CD4-positive, alpha-beta T cell (primary cell): ENCODE measurements at regions of chr17 and their contacts with region 1.

Region 1: GRCh38 chr17:78806451-78806850 is 24.4 kb upstream of the CYTH1 start:
- DNase-seq: peak in 9 of 14 experiments; percentile 27 to 87 (median 66)
- ATAC-seq: peak; percentile 71
- H3K4me3 ChIP-seq: no peak overlapping the region
- H3K4me3 Mint-ChIP-seq: peak overlapping the region; percentile 84
- H3K27ac ChIP-seq: peak overlapping the region in 1 of 2 donors; percentile 64
- H3K27ac Mint-ChIP-seq: peak overlapping the region; percentile 95
- H3K4me1 ChIP-seq: peaks cover 52% of the 10 kb centered on the region
- H3K4me1 Mint-ChIP-seq: peaks cover 63% of the 10 kb centered on the region
- H3K27me3 ChIP-seq: no peaks in the 10 kb centered on the region
- H3K27me3 Mint-ChIP-seq: no peaks in the 10 kb centered on the region
- CTCF ChIP-seq: peak; percentile 47

Region 2: DNA sequence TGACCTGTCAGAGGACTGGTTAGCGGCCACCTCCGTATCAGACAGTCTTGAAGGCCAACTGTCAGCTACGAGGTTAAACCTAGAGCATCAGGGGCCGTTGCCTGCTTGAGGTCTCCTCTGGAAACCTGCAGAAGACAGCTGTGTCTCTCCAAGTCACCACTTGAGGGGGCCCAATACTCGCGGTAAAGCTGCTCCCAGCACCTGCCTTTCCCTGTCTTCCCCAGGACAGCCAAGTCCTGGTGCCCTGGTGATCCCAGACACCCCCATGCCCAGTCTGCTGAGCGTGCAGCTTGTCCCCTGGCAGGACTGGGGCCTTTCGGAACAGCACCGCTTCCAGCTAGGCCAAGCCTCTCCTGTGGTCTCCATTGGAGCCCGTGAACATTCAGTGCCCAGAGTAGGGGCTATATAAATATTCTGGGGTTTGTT is 309.3 kb before region 1 on chr17:
- CTCF ChIA-PET with region 1: interaction called, 3 read pairs
- POLR2A ChIA-PET with region 1: no interaction called
- intact Hi-C with region 1: loop called in 1 of 2 experiments (anchors 10 kb)
- DNase-seq: peak; percentile 10 to 78 (median 46)
- ATAC-seq: peak; percentile 76
- H3K4me3 ChIP-seq: no peak overlapping the region
- H3K4me3 Mint-ChIP-seq: no peak overlapping the region
- H3K27ac ChIP-seq: no peak overlapping the region
- H3K27ac Mint-ChIP-seq: no peak overlapping the region
- H3K4me1 ChIP-seq: no peaks in the 10 kb centered on the region
- H3K4me1 Mint-ChIP-seq: no peaks in the 10 kb centered on the region
- H3K27me3 ChIP-seq: no peaks in the 10 kb centered on the region
- H3K27me3 Mint-ChIP-seq: no peaks in the 10 kb centered on the region
- CTCF ChIP-seq: peak; percentile 63

Region 3: DNA sequence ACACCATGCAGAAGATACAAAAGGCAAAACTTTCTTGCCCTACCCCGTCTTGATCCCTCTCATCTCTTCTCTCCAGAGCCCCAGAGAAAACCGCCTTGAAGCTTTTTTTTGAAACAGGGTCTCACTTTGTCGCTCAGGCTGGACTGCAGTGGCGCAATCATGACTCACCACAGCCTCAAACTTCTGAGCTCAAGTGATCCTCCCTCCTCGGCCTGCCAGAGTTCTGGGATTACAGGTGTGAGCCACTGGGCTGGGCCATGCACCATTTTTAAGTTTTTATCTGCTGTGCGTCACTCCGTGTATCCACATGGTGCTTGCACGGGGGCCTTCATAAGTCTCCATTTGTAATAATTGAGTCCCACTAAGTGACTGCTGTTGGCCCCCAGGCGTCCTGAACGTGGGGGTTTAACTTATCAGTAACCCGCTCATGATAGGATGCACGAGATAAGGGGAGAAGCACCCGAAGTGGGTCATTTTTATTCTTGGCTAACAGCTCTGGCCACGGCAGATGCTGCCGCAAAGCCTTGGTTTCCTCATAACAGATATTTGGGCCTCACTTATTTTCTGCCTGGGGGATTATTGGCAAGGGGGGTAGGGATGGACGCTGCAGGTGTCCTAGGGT is 237.8 kb before region 1 on chr17:
- CTCF ChIA-PET with region 1: no interaction called
- POLR2A ChIA-PET with region 1: no interaction called
- intact Hi-C with region 1: no loop called
- DNase-seq: peak in 2 of 14 experiments; percentile 40 to 52
- ATAC-seq: no peak
- H3K4me3 ChIP-seq: no peak overlapping the region
- H3K4me3 Mint-ChIP-seq: no peak overlapping the region
- H3K27ac ChIP-seq: no peak overlapping the region
- H3K27ac Mint-ChIP-seq: no peak overlapping the region
- H3K4me1 ChIP-seq: no peaks in the 10 kb centered on the region
- H3K4me1 Mint-ChIP-seq: no peaks in the 10 kb centered on the region
- H3K27me3 ChIP-seq: no peaks in the 10 kb centered on the region
- H3K27me3 Mint-ChIP-seq: no peaks in the 10 kb centered on the region
- CTCF ChIP-seq: no peak

Region 4: DNA sequence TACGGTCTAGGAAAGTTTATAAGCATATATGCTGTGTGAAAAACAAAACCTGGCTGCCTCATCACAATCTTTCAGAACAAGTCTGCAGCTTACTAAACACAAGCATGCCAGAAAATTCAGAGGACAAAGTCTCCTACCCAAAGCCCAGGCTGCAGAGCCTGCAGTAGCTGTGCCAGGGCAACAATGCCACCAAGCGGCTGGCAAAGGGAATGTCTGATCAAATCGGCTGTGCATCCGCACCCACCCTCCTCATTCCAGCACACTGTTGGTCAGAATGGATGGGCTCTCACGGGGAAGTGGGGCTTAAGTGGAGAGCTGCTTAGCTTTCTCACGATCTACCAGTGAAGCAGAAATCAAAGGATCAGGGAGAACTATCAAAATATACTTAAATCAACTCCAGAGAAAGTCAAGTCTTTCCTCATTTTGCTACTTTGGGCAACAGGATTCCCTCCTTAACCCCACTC is 97.9 kb before region 1 on chr17:
- CTCF ChIA-PET with region 1: interaction called, 10 read pairs
- POLR2A ChIA-PET with region 1: interaction called, 3 read pairs
- intact Hi-C with region 1: no loop called
- DNase-seq: peak; percentile 42 to 81 (median 54)
- ATAC-seq: peak; percentile 81
- H3K4me3 ChIP-seq: no peak overlapping the region
- H3K4me3 Mint-ChIP-seq: peak overlapping the region; percentile 79
- H3K27ac ChIP-seq: peak overlapping the region; percentile 11 to 39
- H3K27ac Mint-ChIP-seq: peak overlapping the region; percentile 78
- H3K4me1 ChIP-seq: peaks cover 51% of the 10 kb centered on the region
- H3K4me1 Mint-ChIP-seq: peaks cover 67% of the 10 kb centered on the region
- H3K27me3 ChIP-seq: no peaks in the 10 kb centered on the region
- H3K27me3 Mint-ChIP-seq: no peaks in the 10 kb centered on the region
- CTCF ChIP-seq: peak; percentile 87

Region 5: DNA sequence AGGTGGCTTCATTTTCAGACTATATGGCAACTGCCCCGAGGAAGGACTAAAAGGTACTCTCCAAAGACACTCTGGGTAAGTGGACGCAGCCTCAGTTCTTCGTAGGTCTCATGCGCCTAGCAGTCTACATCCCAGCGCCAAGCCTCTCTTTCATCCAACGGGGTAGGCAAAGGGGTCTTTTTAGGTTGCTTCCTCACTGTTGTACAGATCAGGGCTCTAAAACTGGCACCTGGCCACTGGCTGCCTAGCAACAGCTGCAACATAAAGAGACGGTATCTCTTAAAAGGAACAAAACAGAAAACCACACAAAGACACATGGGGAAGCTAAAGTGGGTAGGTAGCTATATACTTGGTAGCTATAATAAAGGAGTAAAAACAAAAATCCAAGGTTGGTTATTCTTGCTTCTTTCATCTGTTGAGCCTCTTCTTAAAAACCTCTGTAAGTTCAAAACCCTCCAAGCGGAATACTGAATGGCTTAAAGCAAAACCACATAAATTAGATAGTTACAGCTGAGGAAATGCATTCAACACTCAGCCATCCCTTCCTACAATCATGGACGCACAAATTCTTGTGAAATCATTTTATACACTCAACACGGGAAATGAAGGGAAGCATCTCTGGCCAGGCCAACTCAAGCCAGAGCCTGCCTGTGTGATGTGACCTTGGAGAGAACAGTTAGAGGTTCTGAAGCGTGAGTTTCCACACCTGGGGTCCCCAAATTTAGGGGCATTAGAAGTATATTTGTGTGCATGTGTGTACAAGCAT is 47.1 kb before region 1 on chr17:
- CTCF ChIA-PET with region 1: no interaction called
- POLR2A ChIA-PET with region 1: interaction called, 8 read pairs
- intact Hi-C with region 1: loop called in 1 of 2 experiments (anchors 2 kb)
- DNase-seq: peak; percentile 72 to 94 (median 82)
- ATAC-seq: peak; percentile 80
- H3K4me3 ChIP-seq: peak overlapping the region; percentile 32
- H3K4me3 Mint-ChIP-seq: peak overlapping the region; percentile 73
- H3K27ac ChIP-seq: peak overlapping the region; percentile 94 to 95
- H3K27ac Mint-ChIP-seq: peak overlapping the region; percentile 87
- H3K4me1 ChIP-seq: peaks cover 92% of the 10 kb centered on the region
- H3K4me1 Mint-ChIP-seq: peaks cover 85% of the 10 kb centered on the region
- H3K27me3 ChIP-seq: no peaks in the 10 kb centered on the region
- H3K27me3 Mint-ChIP-seq: no peaks in the 10 kb centered on the region
- CTCF ChIP-seq: no peak

Region 6: DNA sequence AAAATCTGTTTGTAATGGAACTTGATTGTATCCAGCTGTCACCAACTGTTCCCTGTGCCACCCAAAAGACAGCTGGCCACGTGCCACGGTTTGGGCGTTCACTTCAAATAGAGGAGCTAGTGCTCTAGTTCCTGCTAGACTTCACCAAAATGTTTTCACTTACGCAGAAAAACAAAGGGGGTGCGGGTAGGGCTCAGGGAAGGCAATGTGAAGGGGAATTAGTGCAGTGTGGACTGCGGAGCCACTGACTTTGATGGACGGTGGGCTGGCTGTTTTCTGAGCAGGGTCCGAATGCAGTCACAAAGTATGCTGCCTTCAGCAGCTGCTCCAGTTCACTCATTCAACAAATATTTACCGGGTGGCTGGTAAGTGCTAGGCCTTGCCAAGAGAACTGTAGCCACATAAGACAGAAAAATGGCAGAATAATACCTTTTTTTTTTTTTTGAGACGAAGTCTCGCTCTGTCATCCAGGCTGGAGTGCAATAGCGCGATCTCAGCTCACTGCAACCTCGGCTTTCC is 16.7 kb before region 1 on chr17:
- CTCF ChIA-PET with region 1: interaction called, 4 read pairs
- POLR2A ChIA-PET with region 1: interaction called, 43 read pairs
- intact Hi-C with region 1: loop called (anchors 2 kb)
- DNase-seq: peak; percentile 42 to 85 (median 74)
- ATAC-seq: peak; percentile 82
- H3K4me3 ChIP-seq: peak overlapping the region; percentile 19
- H3K4me3 Mint-ChIP-seq: peak overlapping the region; percentile 75
- H3K27ac ChIP-seq: peak overlapping the region; percentile 51 to 73
- H3K27ac Mint-ChIP-seq: peak overlapping the region; percentile 97
- H3K4me1 ChIP-seq: peaks cover 87% of the 10 kb centered on the region
- H3K4me1 Mint-ChIP-seq: peaks cover 80% of the 10 kb centered on the region
- H3K27me3 ChIP-seq: no peaks in the 10 kb centered on the region
- H3K27me3 Mint-ChIP-seq: no peaks in the 10 kb centered on the region
- CTCF ChIP-seq: no peak

Region 7: GRCh38 chr17:78818932-78819331 is 12.5 kb after region 1 on chr17:
- CTCF ChIA-PET with region 1: interaction called, 11 read pairs
- POLR2A ChIA-PET with region 1: interaction called, 58 read pairs
- intact Hi-C with region 1: loop called in 1 of 2 experiments (anchors 1 kb)
- DNase-seq: peak in 13 of 14 experiments; percentile 40 to 88 (median 62)
- ATAC-seq: peak; percentile 59
- H3K4me3 ChIP-seq: peak overlapping the region; percentile 3
- H3K4me3 Mint-ChIP-seq: peak overlapping the region; percentile 71
- H3K27ac ChIP-seq: peak overlapping the region; percentile 76 to 79
- H3K27ac Mint-ChIP-seq: peak overlapping the region; percentile 91
- H3K4me1 ChIP-seq: peaks cover 59% of the 10 kb centered on the region
- H3K4me1 Mint-ChIP-seq: peaks cover 66% of the 10 kb centered on the region
- H3K27me3 ChIP-seq: no peaks in the 10 kb centered on the region
- H3K27me3 Mint-ChIP-seq: no peaks in the 10 kb centered on the region
- CTCF ChIP-seq: no peak

Region 8: DNA sequence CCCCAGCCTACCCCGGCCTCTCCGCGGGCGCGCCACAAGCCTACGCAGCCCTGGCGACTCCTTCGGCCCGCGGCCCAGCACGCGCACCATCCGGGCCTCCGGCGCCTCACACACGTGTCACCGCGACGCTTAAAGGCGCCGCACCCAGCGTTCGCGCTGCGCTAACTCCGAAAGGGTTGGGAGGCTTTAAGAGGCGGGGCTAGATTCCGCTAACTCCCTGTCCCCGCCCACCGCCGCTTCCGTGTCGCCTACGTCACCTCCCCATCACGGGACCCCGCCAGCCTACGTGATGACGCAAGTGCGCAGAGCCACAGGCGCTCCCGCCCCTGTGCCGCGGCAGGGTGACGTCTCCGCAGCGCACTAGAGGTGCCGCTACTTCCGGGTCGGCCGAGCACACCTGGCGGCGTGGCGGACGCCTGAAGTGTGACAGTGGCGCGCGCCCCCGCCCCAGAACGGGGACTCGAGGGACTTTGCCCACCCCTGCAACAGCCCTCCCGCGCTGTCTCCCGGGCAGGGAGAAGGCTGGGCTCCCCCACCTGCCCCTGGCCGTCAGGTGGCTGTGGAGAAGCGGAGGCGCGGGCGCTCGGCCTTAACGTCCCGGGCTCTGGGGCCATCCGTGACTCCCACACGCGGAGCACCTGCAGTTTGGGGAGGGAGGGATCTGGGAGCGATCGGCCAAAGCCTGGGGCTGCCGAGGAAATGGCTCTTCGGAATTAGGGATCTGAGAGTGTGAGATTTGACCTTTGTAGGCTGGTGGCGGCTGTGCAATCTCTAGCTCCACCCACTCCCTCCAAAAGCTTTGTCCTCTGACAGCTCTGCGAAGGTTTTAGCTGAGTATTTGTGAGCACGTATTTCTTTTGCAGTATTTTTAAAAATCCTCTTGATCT is 34.5 kb after region 1 on chr17 and contains the start of gene USP36:
- CTCF ChIA-PET with region 1: interaction called, 3 read pairs
- POLR2A ChIA-PET with region 1: interaction called, 13 read pairs
- intact Hi-C with region 1: loop called (anchors 5 kb)
- DNase-seq: peak; percentile 99 to 100 (median 100)
- ATAC-seq: peak; percentile 80
- H3K4me3 ChIP-seq: peak within 1 kb of the TSS; percentile 91
- H3K4me3 Mint-ChIP-seq: peak within 1 kb of the TSS; percentile 99
- H3K27ac ChIP-seq: peak within 1 kb of the TSS; percentile 96 to 99
- H3K27ac Mint-ChIP-seq: peak within 1 kb of the TSS; percentile 93
- H3K4me1 ChIP-seq: peaks cover 52% of the 10 kb centered on the region
- H3K4me1 Mint-ChIP-seq: peaks cover 56% of the 10 kb centered on the region
- H3K27me3 ChIP-seq: no peaks in the 10 kb centered on the region
- H3K27me3 Mint-ChIP-seq: no peaks in the 10 kb centered on the region
- CTCF ChIP-seq: peak; percentile 44
- total RNA-seq, gene USP36: 489 to 494 TPM